Cardiac septum (tissue), 1 donor: ENCODE measurements at regions of chr5 and their contacts with region 1.

Region 1: GRCh38 chr5:82312373-82312856 is 34.3 kb upstream of the RPS23 start:
- DNase-seq: no peak

Region 2: DNA sequence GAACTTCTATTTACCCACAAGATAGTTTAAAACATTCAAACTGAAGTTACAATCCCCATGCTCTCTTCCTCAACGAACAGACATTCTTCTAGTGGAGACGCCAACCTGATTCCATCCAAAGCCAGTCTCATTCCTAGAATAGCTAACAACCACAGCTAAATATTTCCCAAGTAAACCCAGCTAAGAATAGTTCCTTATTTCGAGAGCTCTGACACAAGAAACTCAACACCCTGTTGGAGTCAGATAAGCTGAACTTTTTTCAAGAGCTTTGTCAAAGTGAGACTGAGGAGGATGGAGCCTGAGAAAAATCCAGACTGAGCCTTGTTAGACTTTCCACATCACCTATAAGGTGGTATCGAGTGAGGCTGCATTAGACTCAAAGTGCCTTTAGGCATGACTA is 22.4 kb after region 1 on chr5:
- intact Hi-C with region 1: loop called (anchors 2 kb)
- DNase-seq: no peak

Region 3: GRCh38 chr5:82793808-82794419 is 481.5 kb after region 1 on chr5:
- intact Hi-C with region 1: loop called (anchors 10 kb)
- DNase-seq: no peak

Region 4: GRCh38 chr5:82833277-82833676 is 520.9 kb after region 1 on chr5:
- intact Hi-C with region 1: no loop called
- DNase-seq: no peak

Region 5: DNA sequence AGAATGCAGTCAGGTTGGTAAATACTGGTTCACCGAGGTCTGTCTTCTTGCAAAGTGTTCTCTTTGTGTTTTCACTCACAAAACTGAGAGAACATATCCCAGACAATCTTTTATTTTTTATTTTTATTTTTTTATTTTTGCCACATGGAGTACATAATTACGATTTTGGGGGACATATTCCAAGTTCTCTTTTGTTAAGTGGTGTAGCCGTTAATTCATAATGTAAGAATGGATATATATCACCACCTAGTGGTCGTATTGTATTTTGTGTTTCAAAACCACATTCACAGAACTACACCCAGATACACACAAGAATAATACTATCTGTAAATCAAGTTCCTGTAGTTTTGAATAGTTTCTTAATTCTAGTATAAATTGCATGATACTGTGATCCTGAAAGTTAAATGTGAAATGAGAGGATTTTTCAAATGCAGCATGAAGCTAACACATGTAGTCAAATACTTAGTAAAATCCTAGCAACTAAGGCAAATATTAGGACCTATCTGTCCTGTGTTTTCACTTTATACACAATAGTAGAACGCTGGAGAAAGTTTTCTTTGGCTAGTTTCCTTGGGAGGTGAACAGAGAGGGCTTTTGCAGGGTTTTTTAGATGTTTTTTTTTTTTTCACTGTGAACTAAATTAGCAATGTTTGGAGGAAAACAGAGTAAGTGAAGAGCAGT is 1251.8 kb after region 1 on chr5:
- intact Hi-C with region 1: loop called (anchors 10 kb)
- DNase-seq: no peak